ENCODE measurements at regions of chr14 and their contacts with region 1.

Region 1: DNA sequence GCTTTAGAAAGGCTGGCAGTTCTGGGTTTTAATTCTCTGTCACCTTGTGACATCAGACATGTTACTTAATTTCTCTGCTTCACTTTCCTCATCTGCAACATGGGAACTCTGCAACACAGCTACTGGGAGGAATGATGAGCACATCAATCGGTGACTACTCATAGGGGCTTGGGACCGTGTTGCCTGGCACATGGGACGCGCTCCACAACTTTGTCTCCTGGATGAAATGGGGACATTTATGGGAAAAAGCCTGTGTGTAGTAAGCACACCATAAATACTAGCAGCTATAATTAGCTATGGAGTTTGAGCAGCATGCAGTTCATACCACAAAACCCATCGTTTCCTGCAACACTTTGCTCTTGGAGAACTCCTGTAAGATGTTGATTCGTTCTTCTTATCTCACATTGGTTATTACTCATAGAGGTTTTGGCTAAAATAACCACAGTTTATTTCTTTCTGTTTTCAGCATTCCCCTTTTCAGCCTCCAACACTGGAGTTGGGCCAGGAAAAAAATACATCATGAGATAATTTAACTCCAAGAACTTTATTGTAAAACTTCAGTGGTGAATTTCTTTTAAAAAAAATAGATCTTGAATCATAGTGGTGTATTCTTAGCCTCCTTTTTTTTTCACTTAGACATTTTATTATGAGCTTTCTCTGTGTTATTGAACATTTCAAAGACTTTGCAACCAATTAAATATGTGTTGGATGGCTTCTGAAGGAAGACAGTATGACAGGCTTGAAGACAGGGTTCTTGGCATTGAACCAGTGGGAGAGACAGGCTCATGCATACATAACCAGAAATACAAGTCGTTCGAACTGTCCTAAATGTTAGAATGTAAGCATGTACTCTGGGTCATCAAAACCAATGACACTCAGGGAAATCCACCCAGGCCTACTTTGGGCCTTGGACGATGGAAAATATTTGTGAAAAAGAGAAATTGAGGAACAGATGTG is 72.7 kb downstream of the RIN3 start:
- DNase-seq: peak; percentile 69
- H3K4me3 Mint-ChIP-seq: peak overlapping the region; percentile 52
- H3K27ac Mint-ChIP-seq: peak overlapping the region; percentile 93
- H3K4me1 Mint-ChIP-seq: peaks cover 92% of the 10 kb centered on the region
- H3K27me3 Mint-ChIP-seq: peaks cover 2% of the 10 kb centered on the region

Region 2: GRCh38 chr14:92556863-92557543 is 29.3 kb before region 1 on chr14:
- CTCF ChIA-PET with region 1: no interaction called
- POLR2A ChIA-PET with region 1: no interaction called
- DNase-seq: no peak
- H3K4me3 Mint-ChIP-seq: no peak overlapping the region
- H3K27ac Mint-ChIP-seq: no peak overlapping the region
- H3K4me1 Mint-ChIP-seq: peaks cover 66% of the 10 kb centered on the region
- H3K27me3 Mint-ChIP-seq: peaks cover 5% of the 10 kb centered on the region

Region 3: GRCh38 chr14:92596331-92596911 is 10.2 kb after region 1 on chr14:
- CTCF ChIA-PET with region 1: interaction called, 17 read pairs
- POLR2A ChIA-PET with region 1: no interaction called
- DNase-seq: no peak
- H3K4me3 Mint-ChIP-seq: no peak overlapping the region
- H3K27ac Mint-ChIP-seq: no peak overlapping the region
- H3K4me1 Mint-ChIP-seq: peaks cover 21% of the 10 kb centered on the region
- H3K27me3 Mint-ChIP-seq: peaks cover 7% of the 10 kb centered on the region

Measured in activated CD4-positive, alpha-beta T cell treated with anti-CD3 and anti-CD28 coated beads, Interleukin-2, amount 10 ng/mL, durations not matched to agents 7 days and 5 days (primary cell).